ENCODE measurements at regions of chr3 and their contacts with region 1.

Region 1: GRCh38 chr3:8769088-8769822 is at the start of gene OXTR:
- DNase-seq: peak; percentile 72 to 97
- H3K4me3 ChIP-seq: peak within 1 kb of the TSS; percentile 20 to 53 (median 37); a peak in 7 of 8 replicates
- H3K27ac ChIP-seq: no peak within 1 kb of the TSS
- H3K4me1 ChIP-seq: peaks cover 0 to 17% (median 8%) of the 10 kb centered on the region in 4 experiments; a peak in 6 of 7 replicates
- H3K27me3 ChIP-seq: peaks cover 24 to 38% (median 37%) of the 10 kb centered on the region in 4 experiments
- CTCF ChIP-seq: peak; percentile 98 to 99 (median 98)
- EP300 ChIP-seq: no peak; a peak in 1 of 3 replicates
- POLR2A ChIP-seq: no peak
- RAD21 ChIP-seq: peak; percentile 86 to 90
- total RNA-seq, gene OXTR: 2.2 and 2.3 TPM in 2 replicates

Region 2: GRCh38 chr3:8705575-8705974 is 63.7 kb before region 1 on chr3:
- CTCF ChIA-PET with region 1: interaction called, 11 read pairs
- POLR2A ChIA-PET with region 1: no interaction called
- DNase-seq: no peak
- H3K4me3 ChIP-seq: no peak overlapping the region
- H3K27ac ChIP-seq: no peak overlapping the region
- H3K4me1 ChIP-seq: no peaks in the 10 kb centered on the region
- H3K27me3 ChIP-seq: peaks cover 3 to 20% (median 19%) of the 10 kb centered on the region in 4 experiments
- CTCF ChIP-seq: no peak
- EP300 ChIP-seq: no peak
- POLR2A ChIP-seq: no peak
- RAD21 ChIP-seq: no peak

Region 3: GRCh38 chr3:8733332-8734094 is 35.7 kb before region 1 on chr3 and contains the start of gene CAV3:
- CTCF ChIA-PET with region 1: interaction called, 16 read pairs
- POLR2A ChIA-PET with region 1: no interaction called
- DNase-seq: no peak
- H3K4me3 ChIP-seq: no peak within 1 kb of the TSS
- H3K27ac ChIP-seq: no peak within 1 kb of the TSS
- H3K4me1 ChIP-seq: peaks cover 0 to 7% (median 3%) of the 10 kb centered on the region in 4 experiments; a peak in 4 of 7 replicates
- H3K27me3 ChIP-seq: peaks cover 0 to 2% (median 0%) of the 10 kb centered on the region in 4 experiments; a peak in 3 of 7 replicates
- CTCF ChIP-seq: no peak
- EP300 ChIP-seq: no peak
- POLR2A ChIP-seq: no peak
- RAD21 ChIP-seq: no peak
- total RNA-seq, gene CAV3: not detected in 2 replicates

Region 4: GRCh38 chr3:8755563-8756237 is 13.6 kb before region 1 on chr3:
- CTCF ChIA-PET with region 1: interaction called, 30 read pairs
- POLR2A ChIA-PET with region 1: no interaction called
- DNase-seq: no peak
- H3K4me3 ChIP-seq: no peak overlapping the region
- H3K27ac ChIP-seq: no peak overlapping the region
- H3K4me1 ChIP-seq: peaks cover 0 to 3% (median 1%) of the 10 kb centered on the region in 4 experiments; a peak in 3 of 7 replicates
- H3K27me3 ChIP-seq: peaks cover 0 to 4% (median 0%) of the 10 kb centered on the region in 4 experiments; a peak in 2 of 7 replicates
- CTCF ChIP-seq: peak; percentile 12 to 62 (median 17)
- EP300 ChIP-seq: no peak
- POLR2A ChIP-seq: no peak
- RAD21 ChIP-seq: peak in 1 of 2 experiments; percentile 20; a peak in 3 of 4 replicates

Region 5: DNA sequence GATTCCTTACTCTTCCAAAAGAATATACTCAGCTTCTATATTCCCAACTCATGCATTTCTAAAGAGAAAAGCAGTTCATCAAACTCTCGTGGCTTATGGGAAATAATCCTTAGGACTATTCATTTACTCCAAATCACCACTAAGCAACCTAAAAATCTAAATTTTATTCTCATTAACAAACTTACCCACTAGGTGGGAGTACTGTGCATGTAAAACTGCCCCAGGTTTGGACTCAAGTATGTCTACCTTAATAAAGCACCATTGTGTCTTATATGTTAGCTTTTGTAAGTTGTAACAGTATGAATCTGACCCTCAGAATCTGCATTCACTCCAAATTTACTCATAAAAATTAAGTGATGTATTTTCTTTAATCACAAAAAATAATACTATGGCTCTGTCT is 168.8 kb after region 1 on chr3:
- CTCF ChIA-PET with region 1: interaction called, 11 read pairs
- POLR2A ChIA-PET with region 1: no interaction called
- DNase-seq: no peak
- H3K4me3 ChIP-seq: no peak overlapping the region
- H3K27ac ChIP-seq: no peak overlapping the region
- H3K4me1 ChIP-seq: no peaks in the 10 kb centered on the region
- H3K27me3 ChIP-seq: no peaks in the 10 kb centered on the region
- CTCF ChIP-seq: peak in 1 of 3 experiments; percentile 26; a peak in 2 of 4 replicates
- EP300 ChIP-seq: no peak
- POLR2A ChIP-seq: no peak
- RAD21 ChIP-seq: peak in 1 of 2 experiments; percentile 23; a peak in 1 of 4 replicates

Region 6: DNA sequence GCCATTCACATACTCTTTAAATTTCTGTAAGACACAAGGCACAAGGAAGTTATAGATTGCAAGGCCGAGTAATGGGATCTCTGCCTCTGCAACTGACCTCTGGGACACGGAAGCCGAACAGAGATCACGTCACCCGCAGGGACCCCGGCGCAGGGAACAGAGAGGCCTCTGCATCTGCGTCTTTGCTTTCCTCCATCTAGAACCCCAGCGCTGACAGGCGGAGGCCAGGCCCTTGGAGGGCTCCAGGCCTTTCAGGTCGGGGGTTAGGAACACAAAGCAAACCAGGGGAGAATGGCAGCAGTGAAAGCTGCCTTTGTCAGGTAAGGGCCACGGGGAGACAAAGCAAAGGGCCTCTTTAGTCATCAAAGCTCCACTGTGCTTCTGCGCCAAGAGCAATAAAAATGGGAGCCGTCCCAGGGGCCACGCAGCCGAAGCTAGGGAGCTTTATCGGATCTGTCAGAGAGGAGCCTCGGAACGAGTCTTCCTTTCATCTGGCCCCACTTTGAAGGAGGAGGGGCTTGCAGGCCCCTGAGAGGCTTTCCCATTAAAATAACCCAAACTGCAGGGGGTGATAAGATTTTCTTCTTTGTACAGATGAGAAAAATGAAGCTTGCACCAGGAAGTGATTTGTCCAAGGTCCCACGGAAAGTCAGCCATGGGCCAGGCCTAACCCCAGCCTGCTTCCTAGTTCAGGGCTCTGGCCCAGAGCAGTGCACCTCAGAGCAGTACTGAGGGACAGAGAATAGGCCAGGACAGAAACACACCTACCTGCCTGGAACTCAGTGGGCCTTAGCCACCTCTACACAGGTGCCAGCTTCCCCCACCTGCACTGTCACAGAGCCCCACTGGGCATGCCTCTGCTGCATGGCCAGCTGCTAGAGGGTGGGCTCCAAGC is 278.4 kb after region 1 on chr3:
- CTCF ChIA-PET with region 1: no interaction called
- POLR2A ChIA-PET with region 1: no interaction called
- DNase-seq: no peak
- H3K4me3 ChIP-seq: no peak overlapping the region
- H3K27ac ChIP-seq: no peak overlapping the region
- H3K4me1 ChIP-seq: peaks cover 0 to 4% (median 0%) of the 10 kb centered on the region in 4 experiments; a peak in 2 of 7 replicates
- H3K27me3 ChIP-seq: no peaks in the 10 kb centered on the region
- CTCF ChIP-seq: no peak
- EP300 ChIP-seq: no peak
- POLR2A ChIP-seq: no peak
- RAD21 ChIP-seq: no peak

Measured in H1 (cell line).